HEK293 (cell line): ENCODE measurements at regions of chr16 and their contacts with region 1.

Region 1: GRCh38 chr16:9134739-9135138 is 43.3 kb downstream of the HAPSTR1 start:
- H3K4me3 ChIP-seq: no peak overlapping the region
- H3K27ac ChIP-seq: no peak overlapping the region
- H3K4me1 ChIP-seq: no peaks in the 10 kb centered on the region
- CTCF ChIP-seq: peak; percentile 49; the same call in 1 of the 2 replicates

Region 2: DNA sequence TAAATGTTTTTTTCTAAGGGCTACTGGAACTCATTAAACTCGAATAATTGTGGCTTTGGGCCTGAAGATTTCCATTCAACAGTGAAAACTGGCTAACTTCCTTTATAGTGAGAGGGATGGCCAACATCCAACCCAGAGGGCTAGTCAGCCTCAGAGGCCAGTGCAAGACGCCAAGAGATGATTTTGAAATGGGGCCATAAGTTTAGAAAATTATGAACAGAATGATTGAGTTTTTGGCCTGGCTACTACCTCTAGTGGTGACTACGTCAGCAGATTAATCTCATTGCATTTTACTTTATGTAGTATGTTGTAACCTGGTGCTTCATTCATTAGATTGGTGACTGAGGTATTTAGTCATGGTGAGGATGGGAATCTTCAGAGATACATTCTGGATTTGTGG is 14.9 kb before region 1 on chr16:
- CTCF ChIA-PET with region 1: interaction called, 10 read pairs
- POLR2A ChIA-PET with region 1: no interaction called
- H3K4me3 ChIP-seq: no peak overlapping the region
- H3K27ac ChIP-seq: no peak overlapping the region
- H3K4me1 ChIP-seq: no peaks in the 10 kb centered on the region
- CTCF ChIP-seq: no peak

Region 3: DNA sequence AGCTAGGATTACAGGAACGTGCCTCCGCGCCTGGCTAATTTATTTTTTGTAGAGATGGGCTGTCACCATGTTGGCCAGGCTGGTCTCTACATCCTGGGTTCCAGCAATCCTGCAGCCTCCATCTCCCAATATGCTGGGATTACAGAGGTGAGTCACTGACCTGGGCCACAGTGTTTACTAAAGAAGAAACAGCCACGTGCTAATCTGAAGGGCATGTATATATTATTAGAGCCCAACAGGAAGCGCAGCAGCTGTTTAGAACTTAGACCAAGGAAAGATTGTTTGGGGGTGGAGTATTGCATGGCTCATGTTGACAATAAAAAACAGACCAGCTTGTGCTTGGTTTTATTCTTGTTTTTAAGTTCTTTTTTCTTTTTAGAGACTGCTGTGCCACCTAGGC is 16.9 kb after region 1 on chr16:
- CTCF ChIA-PET with region 1: interaction called, 15 read pairs
- POLR2A ChIA-PET with region 1: interaction called, 7 read pairs
- H3K4me3 ChIP-seq: no peak overlapping the region
- H3K27ac ChIP-seq: no peak overlapping the region
- H3K4me1 ChIP-seq: no peaks in the 10 kb centered on the region
- CTCF ChIP-seq: no peak

Region 4: DNA sequence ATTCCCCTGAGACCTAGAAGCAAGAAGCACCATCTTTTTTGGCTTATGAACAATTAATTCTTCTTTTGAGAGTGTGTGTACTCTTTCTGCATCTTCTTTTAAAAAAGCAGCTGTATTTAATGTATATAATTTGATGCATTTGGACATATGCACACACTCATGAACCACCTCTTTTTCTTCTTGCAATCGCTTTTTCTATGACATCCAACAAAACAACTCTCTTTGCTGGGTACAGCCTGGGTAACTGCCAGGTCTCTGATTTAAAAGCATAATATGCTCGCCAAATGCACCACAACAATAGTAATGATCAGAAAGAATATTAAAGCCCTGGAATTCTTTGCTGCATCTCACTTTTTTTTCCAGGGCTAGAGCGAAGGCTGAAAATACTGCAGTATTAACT is 54.0 kb after region 1 on chr16:
- CTCF ChIA-PET with region 1: no interaction called
- POLR2A ChIA-PET with region 1: no interaction called
- H3K4me3 ChIP-seq: no peak overlapping the region
- H3K27ac ChIP-seq: no peak overlapping the region
- H3K4me1 ChIP-seq: no peaks in the 10 kb centered on the region
- CTCF ChIP-seq: no peak

Region 5: DNA sequence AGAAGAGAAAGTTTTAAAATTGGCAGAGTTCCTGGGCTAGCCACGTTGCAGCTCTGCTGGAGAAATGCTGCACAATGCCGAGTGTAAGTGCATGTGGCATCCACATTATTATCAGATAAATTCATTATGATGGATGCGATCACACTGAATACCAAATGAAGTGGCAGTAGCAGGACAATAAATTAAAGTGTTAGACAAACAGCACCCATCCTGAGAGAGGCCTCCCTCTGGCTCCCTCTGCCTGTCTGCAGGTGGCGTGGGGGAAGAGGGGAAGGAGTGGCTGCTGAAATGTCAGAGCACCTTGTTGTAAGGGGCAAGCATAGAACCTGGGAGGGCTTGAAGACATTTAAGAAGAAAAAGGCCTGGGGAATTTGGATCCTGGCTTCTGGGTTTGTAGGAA is 280.8 kb after region 1 on chr16:
- CTCF ChIA-PET with region 1: no interaction called
- POLR2A ChIA-PET with region 1: no interaction called
- H3K4me3 ChIP-seq: no peak overlapping the region
- H3K27ac ChIP-seq: no peak overlapping the region
- H3K4me1 ChIP-seq: no peaks in the 10 kb centered on the region
- CTCF ChIP-seq: no peak